ENCODE measurements at regions of chr5 and their contacts with region 1.

Region 1: DNA sequence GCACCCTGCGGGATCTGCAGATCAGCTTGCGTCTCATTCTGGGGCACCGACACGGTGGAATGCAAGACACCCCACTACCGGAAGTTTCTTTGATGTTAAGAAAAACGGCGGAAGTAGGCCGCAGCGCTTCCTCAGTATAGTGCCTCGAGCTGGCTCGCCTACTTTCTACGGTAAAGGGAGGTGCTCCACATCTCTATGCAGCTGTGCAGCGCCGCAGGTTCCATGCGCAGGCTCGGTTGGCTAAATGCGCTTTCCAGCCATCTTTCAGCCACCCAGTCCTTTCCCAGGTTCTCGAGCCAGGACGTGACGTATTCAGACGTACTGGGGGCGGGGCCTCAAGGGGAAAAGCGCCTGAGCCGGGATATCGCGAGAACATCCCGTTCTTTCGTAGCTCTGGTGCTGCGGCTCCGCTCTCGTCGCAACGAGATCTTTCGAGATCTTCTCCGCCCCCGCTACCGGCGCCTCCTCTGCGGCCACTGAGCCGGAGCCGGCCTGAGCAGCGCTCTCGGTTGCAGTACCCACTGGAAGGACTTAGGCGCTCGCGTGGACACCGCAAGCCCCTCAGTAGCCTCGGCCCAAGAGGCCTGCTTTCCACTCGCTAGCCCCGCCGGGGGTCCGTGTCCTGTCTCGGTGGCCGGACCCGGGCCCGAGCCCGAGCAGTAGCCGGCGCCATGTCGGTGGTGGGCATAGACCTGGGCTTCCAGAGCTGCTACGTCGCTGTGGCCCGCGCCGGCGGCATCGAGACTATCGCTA is at the start of gene HSPA4:
- DNase-seq: peak; percentile 100
- H3K4me3 Mint-ChIP-seq: peak within 1 kb of the TSS; percentile 95
- H3K27ac Mint-ChIP-seq: peak within 1 kb of the TSS; percentile 99
- H3K4me1 Mint-ChIP-seq: peaks cover 32% of the 10 kb centered on the region
- H3K27me3 Mint-ChIP-seq: no peaks in the 10 kb centered on the region
- CTCF ChIP-seq: no peak
- total RNA-seq, gene HSPA4: 173 and 218 TPM in 2 replicates

Region 2: GRCh38 chr5:133015466-133015865 is 36.3 kb before region 1 on chr5:
- CTCF ChIA-PET with region 1: no interaction called
- POLR2A ChIA-PET with region 1: interaction called, 21 read pairs
- intact Hi-C with region 1: no loop called
- DNase-seq: no peak
- H3K4me3 Mint-ChIP-seq: no peak overlapping the region
- H3K27ac Mint-ChIP-seq: no peak overlapping the region
- H3K4me1 Mint-ChIP-seq: no peaks in the 10 kb centered on the region
- H3K27me3 Mint-ChIP-seq: no peaks in the 10 kb centered on the region
- CTCF ChIP-seq: no peak

Region 3: DNA sequence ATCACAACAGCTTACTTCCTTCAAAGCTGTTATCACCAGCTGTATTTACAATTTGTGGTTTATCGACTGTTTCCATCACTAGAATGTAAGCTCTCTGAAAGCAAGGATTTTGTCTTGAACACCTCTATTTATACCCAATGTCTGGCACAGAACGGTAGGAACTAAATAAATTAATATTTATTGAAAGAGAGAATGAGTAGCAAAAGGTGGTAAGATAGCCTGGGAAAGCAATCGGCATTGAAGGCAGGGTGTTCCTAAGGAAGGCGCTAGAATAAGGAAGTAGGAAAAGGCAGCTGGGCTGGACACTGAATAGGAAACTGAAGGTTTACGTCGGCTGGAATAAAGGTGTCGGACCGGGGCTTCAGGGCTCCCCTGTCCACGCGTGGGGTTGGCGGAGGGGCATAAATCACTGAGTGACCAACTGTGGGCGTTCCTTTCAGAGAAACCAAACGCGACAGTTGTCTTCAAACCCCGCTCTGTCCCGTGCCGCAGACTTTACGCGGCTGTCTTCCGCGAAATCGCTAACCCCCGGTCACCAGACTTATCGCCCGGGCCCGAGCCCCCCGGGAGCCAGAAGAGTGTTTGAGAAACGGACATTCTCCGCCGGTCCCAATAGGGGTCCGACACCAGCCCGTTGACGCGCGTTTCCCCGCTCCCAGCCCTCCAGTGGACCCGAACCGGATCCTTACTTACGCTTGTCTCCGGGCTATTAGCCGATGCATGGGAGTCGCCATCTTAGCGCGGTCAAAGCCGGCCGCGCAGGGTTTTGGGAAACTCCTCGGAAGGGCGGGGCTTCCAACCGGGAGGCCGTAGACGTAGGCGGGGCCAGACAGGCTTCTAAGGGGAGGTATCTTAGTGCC is 25.7 kb before region 1 on chr5 and contains the start of gene ZCCHC10:
- CTCF ChIA-PET with region 1: interaction called, 5 read pairs
- POLR2A ChIA-PET with region 1: interaction called, 79 read pairs
- intact Hi-C with region 1: no loop called
- DNase-seq: peak; percentile 95
- H3K4me3 Mint-ChIP-seq: peak within 1 kb of the TSS; percentile 88
- H3K27ac Mint-ChIP-seq: peak within 1 kb of the TSS; percentile 94
- H3K4me1 Mint-ChIP-seq: peaks cover 19% of the 10 kb centered on the region
- H3K27me3 Mint-ChIP-seq: no peaks in the 10 kb centered on the region
- CTCF ChIP-seq: no peak
- total RNA-seq, gene ZCCHC10: 35.0 and 37.7 TPM in 2 replicates

Region 4: DNA sequence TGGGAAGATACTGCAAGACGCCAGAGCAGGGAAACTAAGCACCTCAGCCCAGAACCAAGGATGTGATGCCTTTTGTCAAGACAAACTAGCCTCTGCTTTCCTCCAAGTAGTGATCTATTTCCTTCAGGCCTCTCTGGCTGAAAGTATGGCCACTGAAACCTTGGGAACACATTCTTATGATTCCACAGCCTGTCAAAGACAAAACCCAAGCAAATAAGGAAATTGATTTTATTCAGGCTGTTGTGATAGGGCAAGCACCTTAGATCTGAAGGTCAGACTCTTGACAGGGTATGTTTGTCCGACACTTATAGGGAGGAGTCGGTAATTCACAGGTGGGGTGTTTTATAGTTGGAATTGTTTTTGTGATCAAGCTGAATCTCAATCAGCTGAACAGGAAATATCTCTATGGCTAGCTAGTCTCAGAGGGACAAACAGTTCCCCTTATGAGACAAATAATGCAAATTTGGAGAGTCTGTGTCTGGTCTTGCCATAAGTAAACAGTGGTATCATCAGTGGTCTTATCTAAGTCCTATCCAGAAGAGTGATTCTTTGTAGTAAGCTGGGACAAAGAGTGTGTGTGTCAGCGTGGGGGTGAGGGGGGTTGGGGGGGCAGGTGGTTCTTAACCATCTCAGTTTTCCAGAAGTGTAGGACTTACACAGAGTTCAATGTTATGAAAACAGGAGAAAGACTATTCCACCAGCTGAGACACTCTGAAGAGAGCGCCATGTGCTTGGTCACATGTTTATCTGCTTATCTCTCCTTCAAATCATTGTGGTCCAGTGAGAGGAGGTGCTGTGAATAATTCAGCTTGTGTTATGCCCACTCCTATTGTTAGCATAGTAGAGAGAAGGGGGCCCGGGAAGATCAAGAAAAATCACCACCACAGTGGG is 18.7 kb before region 1 on chr5:
- CTCF ChIA-PET with region 1: interaction called, 9 read pairs
- POLR2A ChIA-PET with region 1: interaction called, 105 read pairs
- intact Hi-C with region 1: no loop called
- DNase-seq: no peak
- H3K4me3 Mint-ChIP-seq: no peak overlapping the region
- H3K27ac Mint-ChIP-seq: no peak overlapping the region
- H3K4me1 Mint-ChIP-seq: no peaks in the 10 kb centered on the region
- H3K27me3 Mint-ChIP-seq: no peaks in the 10 kb centered on the region
- CTCF ChIP-seq: no peak

Region 5: DNA sequence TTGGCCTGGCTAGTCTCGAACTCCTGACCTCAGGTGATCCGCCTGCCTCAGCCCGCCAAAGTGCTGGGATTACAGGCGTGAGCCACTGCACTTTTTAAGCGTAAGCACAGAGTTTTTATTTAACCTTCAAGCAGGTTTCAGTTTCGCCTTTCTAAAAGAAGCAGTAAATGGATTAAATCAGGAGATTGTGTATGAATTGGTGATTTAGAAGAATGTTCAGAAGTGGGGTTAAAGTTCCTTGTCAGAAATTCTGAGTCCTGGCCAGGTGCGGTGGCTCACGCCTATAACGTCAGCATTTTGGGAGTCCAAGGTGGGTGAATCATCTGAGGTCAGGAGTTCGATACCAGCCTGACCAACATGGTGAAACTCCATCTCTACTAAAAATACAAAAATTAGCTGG is 12.2 kb after region 1 on chr5:
- CTCF ChIA-PET with region 1: interaction called, 3 read pairs
- POLR2A ChIA-PET with region 1: interaction called, 26 read pairs
- intact Hi-C with region 1: no loop called
- DNase-seq: peak; percentile 40
- H3K4me3 Mint-ChIP-seq: no peak overlapping the region
- H3K27ac Mint-ChIP-seq: peak overlapping the region; percentile 28
- H3K4me1 Mint-ChIP-seq: peaks cover 21% of the 10 kb centered on the region
- H3K27me3 Mint-ChIP-seq: no peaks in the 10 kb centered on the region
- CTCF ChIP-seq: no peak